Cardiac septum (tissue), 1 donor: ENCODE measurements at regions of chr2 and their contacts with region 1.

Region 1: GRCh38 chr2:217899231-217900009 is 103.4 kb downstream of the TNS1 start:
- DNase-seq: peak; percentile 82

Region 2: GRCh38 chr2:217886720-217887309 is 12.6 kb before region 1 on chr2:
- intact Hi-C with region 1: loop called (anchors 2 kb)
- DNase-seq: peak; percentile 89

Region 3: GRCh38 chr2:217919781-217920351 is 20.4 kb after region 1 on chr2:
- intact Hi-C with region 1: loop called (anchors 2 kb)
- DNase-seq: peak; percentile 72

Region 4: GRCh38 chr2:217932799-217933616 is 33.6 kb after region 1 on chr2:
- intact Hi-C with region 1: loop called (anchors 2 kb)
- DNase-seq: no peak

Region 5: GRCh38 chr2:217988014-217988839 is 88.8 kb after region 1 on chr2:
- intact Hi-C with region 1: loop called (anchors 5 kb)
- DNase-seq: peak; percentile 91

Region 6: DNA sequence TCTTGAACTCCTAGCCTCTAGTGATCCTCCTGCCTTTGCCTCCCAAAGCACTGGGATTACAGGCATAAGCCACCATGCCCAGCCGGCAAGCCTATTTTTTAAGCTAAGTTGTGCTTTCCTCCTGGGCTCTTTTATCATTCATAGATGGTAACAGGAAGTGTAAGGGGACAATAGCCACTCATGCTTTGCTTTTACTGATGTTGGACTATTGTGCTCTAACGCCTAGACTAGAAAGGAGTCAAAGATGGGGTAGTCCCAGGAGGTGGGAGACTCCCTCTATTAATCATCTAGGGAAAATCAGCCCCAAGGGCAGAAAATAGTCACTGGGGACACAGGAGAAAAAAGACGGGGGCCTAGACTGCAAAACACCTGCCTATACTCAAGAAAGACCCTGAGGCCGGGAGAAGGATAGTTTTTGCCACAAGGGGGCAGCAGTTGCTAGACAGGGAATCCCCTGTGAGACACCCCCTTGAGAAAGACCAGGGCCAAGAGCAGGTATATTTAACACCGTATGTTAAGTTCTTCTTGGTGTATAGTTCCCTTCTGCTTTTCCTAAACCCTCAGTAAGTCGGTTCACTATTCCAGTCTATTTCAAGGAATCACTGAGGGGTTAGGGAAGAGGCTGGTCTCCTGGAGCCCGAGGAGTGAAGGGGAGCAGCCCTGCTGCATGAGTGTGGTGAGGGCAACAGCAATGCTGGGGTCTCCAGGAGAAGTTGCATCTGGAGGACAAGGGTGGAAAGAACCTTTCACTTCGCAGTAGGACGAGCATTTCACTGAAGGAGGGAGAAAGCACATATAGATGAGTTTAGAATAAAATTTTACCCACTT is 269.4 kb after region 1 on chr2:
- intact Hi-C with region 1: no loop called
- DNase-seq: no peak